Right ventricle myocardium inferior (tissue), 1 donor: ENCODE measurements at regions of chr7 and their contacts with region 1.

Region 1: DNA sequence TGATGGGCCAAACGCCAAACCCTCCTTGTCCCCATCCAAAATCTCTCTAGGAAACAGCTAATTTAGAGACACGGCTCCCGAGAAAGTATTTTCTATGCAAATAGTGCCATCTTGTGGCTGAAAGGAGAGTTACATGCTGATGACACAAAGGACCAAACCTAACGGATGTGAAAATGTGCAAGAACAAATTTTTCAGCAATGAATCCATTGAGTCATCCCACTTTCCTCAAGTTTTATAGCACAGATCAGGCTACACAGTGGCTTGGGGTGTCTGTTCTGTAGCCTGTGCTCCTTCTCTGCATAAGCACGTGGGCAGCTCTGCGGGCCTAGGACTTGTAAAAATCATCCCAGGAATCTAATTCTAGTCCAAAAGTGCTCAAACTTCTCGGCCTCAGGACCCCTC is 154.8 kb upstream of the PRR15 start:
- DNase-seq: no peak
- ATAC-seq: peak; percentile 28

Region 2: DNA sequence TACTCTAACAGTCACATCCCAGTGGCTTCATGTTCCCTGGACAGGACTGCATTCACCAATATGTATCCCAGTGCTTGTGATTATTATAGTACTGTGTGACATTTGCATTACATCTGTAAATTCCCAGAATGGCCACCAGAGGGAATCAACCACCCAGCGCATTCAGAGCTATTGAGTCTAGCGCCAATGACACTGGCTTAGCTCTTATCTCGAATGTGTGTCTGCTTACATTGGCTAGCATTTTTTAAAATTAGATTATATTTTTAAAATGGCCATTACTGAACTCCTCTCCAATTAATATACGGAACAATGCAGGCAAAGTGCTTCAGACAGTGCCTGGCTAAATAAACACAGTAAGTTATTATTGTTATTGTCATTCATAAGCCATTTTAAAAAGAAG is 487.0 kb before region 1 on chr7:
- intact Hi-C with region 1: loop called (anchors 1 kb)
- DNase-seq: no peak
- ATAC-seq: peak; percentile 93

Region 3: DNA sequence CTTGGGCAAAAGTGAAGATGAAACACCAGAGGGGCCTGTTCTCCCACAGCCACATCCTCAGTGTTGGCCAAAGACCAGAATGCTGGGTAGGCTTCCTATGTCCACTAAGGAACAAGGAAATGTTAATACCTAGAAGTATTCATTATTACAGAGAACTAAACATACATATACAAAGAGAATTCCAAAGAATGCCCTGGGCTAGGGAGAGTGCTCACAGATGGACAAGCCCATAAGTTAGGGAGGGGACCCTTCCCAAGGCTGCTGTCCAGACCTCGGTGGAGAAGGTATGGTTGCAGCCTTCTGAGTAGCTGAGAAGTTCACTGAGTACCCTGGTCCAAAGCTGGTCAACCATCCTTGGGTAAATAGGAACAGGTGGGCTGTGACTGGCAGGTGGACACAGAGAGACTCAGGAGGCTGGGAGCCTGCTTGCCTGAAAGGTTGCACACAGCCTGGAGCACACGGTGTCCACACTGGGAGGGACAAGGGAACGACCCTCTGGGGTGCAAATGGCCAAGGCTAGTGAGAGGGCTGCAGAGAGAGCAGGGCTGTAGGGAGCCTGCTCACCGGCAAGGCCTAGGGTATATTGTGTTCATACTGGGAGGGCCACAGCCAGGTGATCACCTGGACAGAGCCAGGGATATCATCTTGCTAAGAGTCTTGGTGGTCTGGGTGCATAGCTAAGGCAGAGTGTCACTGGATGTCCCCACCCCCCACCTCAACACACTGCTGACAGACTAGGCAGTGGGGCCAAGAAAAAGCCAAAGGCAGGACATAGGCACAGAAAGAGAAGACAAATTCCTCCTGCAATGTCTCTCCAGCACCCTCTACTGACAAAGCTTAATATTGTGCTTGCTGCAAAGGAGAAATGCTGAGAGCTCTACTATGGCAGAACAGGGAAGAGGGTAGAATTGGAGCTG is 302.8 kb before region 1 on chr7:
- intact Hi-C with region 1: loop called (anchors 5 kb)
- DNase-seq: no peak
- ATAC-seq: peak; percentile 80

Region 4: DNA sequence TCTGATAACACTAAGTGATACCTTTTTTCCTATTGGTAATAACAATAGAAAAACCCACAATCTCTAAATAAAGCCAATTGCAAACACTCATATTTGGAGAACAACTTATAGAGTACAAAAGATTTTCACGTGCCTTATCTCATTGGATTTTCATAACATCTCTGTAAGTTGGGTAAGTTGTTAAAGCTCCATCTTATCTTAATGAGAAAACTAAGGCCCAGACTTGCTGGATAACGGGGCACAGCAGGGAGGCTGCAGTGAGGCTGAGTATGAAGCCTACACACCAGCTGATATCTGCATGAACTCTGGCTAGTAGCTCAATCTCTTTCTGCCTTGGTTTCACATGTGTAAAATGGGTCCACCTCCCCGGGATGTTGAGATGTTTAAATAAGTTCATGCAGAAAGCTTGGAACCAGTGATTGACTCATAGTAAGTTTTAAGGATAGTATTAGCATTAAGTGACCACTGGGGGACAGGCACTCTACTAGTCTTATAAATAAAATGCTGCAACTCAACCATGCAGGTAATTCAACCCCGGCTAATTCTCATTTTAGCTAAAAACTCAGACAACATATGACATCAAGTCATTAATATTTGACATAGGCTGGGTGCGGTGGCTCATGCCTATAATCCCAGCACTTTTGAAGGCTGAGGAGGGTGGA is 289.2 kb before region 1 on chr7:
- intact Hi-C with region 1: no loop called
- DNase-seq: no peak
- ATAC-seq: no peak

Region 5: GRCh38 chr7:29189743-29190201 is 219.1 kb before region 1 on chr7:
- intact Hi-C with region 1: loop called (anchors 5 kb)
- DNase-seq: peak; percentile 83
- ATAC-seq: peak; percentile 56